H1 (cell line): ENCODE measurements at regions of chr7 and their contacts with region 1.

Region 1: GRCh38 chr7:129376076-129376777 is 58.0 kb upstream of the STRIP2 start:
- DNase-seq: no peak
- H3K4me3 ChIP-seq: peak overlapping the region in 1 of 4 experiments; percentile 31; a peak in 1 of 8 replicates
- H3K27ac ChIP-seq: no peak overlapping the region
- H3K4me1 ChIP-seq: peaks cover 6 to 17% (median 9%) of the 10 kb centered on the region in 4 experiments; a peak in 5 of 7 replicates
- H3K27me3 ChIP-seq: no peaks in the 10 kb centered on the region
- CTCF ChIP-seq: peak; percentile 28 to 70 (median 49); a peak in 3 of 4 replicates
- EP300 ChIP-seq: no peak
- POLR2A ChIP-seq: no peak
- RAD21 ChIP-seq: peak; percentile 30 to 44; a peak in 3 of 4 replicates

Region 2: GRCh38 chr7:129343099-129343700 is 33.0 kb before region 1 on chr7:
- CTCF ChIA-PET with region 1: interaction called, 15 read pairs
- POLR2A ChIA-PET with region 1: no interaction called
- DNase-seq: no peak
- H3K4me3 ChIP-seq: no peak overlapping the region
- H3K27ac ChIP-seq: no peak overlapping the region
- H3K4me1 ChIP-seq: peaks cover 0 to 12% (median 2%) of the 10 kb centered on the region in 4 experiments; a peak in 2 of 7 replicates
- H3K27me3 ChIP-seq: no peaks in the 10 kb centered on the region
- CTCF ChIP-seq: peak in 1 of 3 experiments; percentile 53; a peak in 2 of 4 replicates
- EP300 ChIP-seq: no peak
- POLR2A ChIP-seq: no peak
- RAD21 ChIP-seq: peak; percentile 37 to 51

Region 3: DNA sequence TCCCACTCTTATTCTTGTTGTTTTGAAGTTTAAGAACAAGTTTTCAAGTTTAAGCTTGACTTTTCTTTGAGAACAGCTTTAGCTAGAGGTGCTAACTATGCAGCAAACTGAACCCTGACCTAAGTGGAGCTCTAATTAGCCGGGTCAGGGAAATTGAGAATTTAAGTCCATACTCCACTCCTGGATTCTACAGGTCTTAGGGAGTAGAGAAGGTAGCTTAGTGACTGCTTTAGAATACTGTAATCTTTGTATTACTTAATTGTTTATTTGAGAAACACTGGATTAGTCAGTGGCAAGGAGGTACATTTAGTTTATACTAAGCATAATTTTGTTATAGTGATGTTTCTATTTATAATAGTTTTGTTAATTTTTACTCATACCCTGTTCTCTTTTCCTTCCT is 16.6 kb before region 1 on chr7:
- CTCF ChIA-PET with region 1: interaction called, 12 read pairs
- POLR2A ChIA-PET with region 1: no interaction called
- DNase-seq: no peak
- H3K4me3 ChIP-seq: no peak overlapping the region
- H3K27ac ChIP-seq: no peak overlapping the region
- H3K4me1 ChIP-seq: no peaks in the 10 kb centered on the region
- H3K27me3 ChIP-seq: no peaks in the 10 kb centered on the region
- CTCF ChIP-seq: no peak
- EP300 ChIP-seq: no peak
- POLR2A ChIP-seq: no peak
- RAD21 ChIP-seq: no peak

Region 4: DNA sequence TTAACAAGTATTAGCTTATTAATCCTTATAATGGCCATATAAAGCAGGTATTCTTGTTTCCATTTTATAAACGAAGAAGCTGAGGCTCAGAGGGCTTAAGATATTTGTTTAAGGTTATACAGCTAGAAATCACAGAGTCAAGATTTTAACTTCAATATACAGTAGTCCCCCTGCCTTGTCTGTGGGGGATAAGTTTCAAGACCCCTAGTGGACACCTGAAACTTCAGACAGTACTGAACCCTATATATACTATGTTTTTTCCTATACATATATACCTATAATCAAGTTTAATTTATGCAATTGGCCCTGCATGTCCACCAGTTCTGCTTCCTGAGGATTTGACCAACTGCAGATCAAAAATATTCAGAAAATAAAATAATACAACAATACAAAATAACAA is 13.6 kb after region 1 on chr7:
- CTCF ChIA-PET with region 1: interaction called, 69 read pairs
- POLR2A ChIA-PET with region 1: interaction called, 3 read pairs
- DNase-seq: no peak
- H3K4me3 ChIP-seq: no peak overlapping the region
- H3K27ac ChIP-seq: no peak overlapping the region
- H3K4me1 ChIP-seq: peaks cover 0 to 5% (median 1%) of the 10 kb centered on the region in 4 experiments; a peak in 2 of 7 replicates
- H3K27me3 ChIP-seq: no peaks in the 10 kb centered on the region
- CTCF ChIP-seq: no peak
- EP300 ChIP-seq: no peak
- POLR2A ChIP-seq: no peak
- RAD21 ChIP-seq: no peak

Region 5: GRCh38 chr7:129433847-129434674 is 57.8 kb after region 1 on chr7 and contains the start of gene STRIP2:
- CTCF ChIA-PET with region 1: interaction called, 37 read pairs
- POLR2A ChIA-PET with region 1: interaction called, 5 read pairs
- DNase-seq: peak; percentile 81 to 99
- H3K4me3 ChIP-seq: peak within 1 kb of the TSS; percentile 74 to 85 (median 76)
- H3K27ac ChIP-seq: 0 out of 2 replicates have a peak within 1 kb of the TSS, but pooled peaks have one; percentile 12
- H3K4me1 ChIP-seq: peaks cover 0 to 4% (median 2%) of the 10 kb centered on the region in 4 experiments; a peak in 3 of 7 replicates
- H3K27me3 ChIP-seq: peaks cover 0 to 9% (median 3%) of the 10 kb centered on the region in 4 experiments; a peak in 3 of 7 replicates
- CTCF ChIP-seq: peak; percentile 22 to 39 (median 34)
- EP300 ChIP-seq: no peak; a peak in 1 of 3 replicates
- POLR2A ChIP-seq: peak; percentile 78 to 82
- RAD21 ChIP-seq: peak in 1 of 2 experiments; percentile 14; a peak in 1 of 4 replicates
- total RNA-seq, gene STRIP2: 7.9 and 8.2 TPM in 2 replicates

Region 6: DNA sequence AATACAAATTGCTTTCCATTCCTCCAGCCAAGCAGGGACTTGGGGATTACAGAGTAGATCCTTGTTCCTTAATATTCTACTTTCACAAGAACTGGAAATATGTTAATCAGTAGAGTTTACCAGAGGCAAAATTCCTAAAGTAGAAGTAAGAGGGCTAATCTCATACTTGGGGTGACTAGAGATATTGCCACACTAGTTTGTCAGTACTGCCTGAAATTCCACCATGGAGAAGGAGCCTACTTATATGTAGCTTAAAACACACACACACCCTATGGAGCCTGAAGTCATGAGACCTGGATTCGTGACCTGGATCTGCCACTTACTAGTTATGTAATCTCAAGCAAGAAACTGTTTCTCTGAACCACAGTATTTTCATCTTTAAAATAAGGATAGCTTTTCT is 91.9 kb after region 1 on chr7:
- CTCF ChIA-PET with region 1: interaction called, 87 read pairs
- POLR2A ChIA-PET with region 1: interaction called, 3 read pairs
- DNase-seq: no peak
- H3K4me3 ChIP-seq: no peak overlapping the region
- H3K27ac ChIP-seq: no peak overlapping the region
- H3K4me1 ChIP-seq: peaks cover 0 to 8% (median 6%) of the 10 kb centered on the region in 4 experiments; a peak in 4 of 7 replicates
- H3K27me3 ChIP-seq: no peaks in the 10 kb centered on the region
- CTCF ChIP-seq: no peak
- EP300 ChIP-seq: no peak
- POLR2A ChIP-seq: no peak
- RAD21 ChIP-seq: no peak

Region 7: GRCh38 chr7:129493555-129493954 is 117.3 kb after region 1 on chr7:
- CTCF ChIA-PET with region 1: interaction called, 13 read pairs
- POLR2A ChIA-PET with region 1: no interaction called
- DNase-seq: no peak
- H3K4me3 ChIP-seq: no peak overlapping the region
- H3K27ac ChIP-seq: no peak overlapping the region
- H3K4me1 ChIP-seq: no peaks in the 10 kb centered on the region
- H3K27me3 ChIP-seq: no peaks in the 10 kb centered on the region
- CTCF ChIP-seq: peak in 2 of 3 experiments; percentile 20 to 36; a peak in 2 of 4 replicates
- EP300 ChIP-seq: no peak
- POLR2A ChIP-seq: no peak
- RAD21 ChIP-seq: peak; percentile 22 to 40; a peak in 2 of 4 replicates